Right lobe of liver (tissue), 6 donors: ENCODE measurements at regions of chr6 and their contacts with region 1.

Region 1: DNA sequence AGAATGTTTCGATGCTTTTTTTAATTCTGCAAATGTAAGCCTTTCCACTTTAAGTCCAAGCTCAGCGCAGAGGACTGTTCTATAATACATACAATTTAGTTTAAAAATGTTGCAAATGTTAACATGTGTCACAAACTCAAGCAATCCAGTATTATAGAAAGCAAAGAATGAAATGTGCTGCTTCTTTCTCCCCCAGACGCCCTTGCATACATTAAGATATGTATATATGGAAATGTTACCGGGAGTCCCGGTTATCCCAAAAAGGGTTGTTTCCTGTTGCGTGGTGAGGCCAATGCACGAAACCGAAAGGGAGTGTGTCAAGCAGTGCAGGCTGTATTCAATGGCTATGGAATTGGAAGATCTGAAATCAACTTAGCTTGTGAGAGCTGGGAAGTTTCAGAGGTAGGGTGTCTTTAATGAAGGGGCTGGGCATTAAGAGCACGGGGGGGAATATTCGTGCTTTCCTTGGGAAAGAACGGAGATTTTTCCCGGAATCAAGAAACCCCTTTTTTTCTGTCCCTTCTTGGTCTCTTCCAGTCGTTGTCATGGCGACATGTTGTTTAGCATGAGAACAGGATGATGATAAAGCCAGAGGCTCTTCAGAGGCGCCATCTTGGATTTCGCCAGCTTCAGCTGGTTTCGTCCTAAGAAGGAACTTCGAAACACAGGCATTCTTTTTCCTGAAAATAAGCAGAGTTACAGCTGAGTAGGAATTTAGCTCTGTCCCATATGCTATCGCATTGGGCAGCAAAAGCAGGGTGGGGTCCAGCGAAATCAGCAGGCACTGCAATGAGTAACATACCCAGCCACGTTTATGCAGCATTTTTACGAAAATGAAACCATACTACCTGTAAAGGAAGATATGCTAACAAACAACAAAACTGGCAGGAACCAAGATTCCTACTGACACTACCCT is 10.1 kb upstream of the NQO2 start:
- DNase-seq: peak; percentile 71 to 89 (median 82)
- ATAC-seq: peak; percentile 53 to 72 (median 68)
- H3K4me3 ChIP-seq: peak overlapping the region; percentile 87 to 92 (median 92)
- H3K27ac ChIP-seq: peak overlapping the region; percentile 97 to 99 (median 97)
- H3K4me1 ChIP-seq: peaks cover 0 to 6% (median 0%) of the 10 kb centered on the region in 4 donors
- H3K27me3 ChIP-seq: no peaks in the 10 kb centered on the region
- CTCF ChIP-seq: peak in 2 of 4 donors; percentile 28 to 36
- POLR2A ChIP-seq: peak; percentile 5

Region 2: GRCh38 chr6:3063733-3064700 is 74.4 kb after region 1 on chr6:
- intact Hi-C with region 1: loop called in 1 of 2 experiments (anchors 5 kb)
- DNase-seq: peak; percentile 97 to 99 (median 97)
- ATAC-seq: peak; percentile 89 to 95 (median 91)
- H3K4me3 ChIP-seq: peak overlapping the region; percentile 64 to 91 (median 68)
- H3K27ac ChIP-seq: peak overlapping the region; percentile 76 to 84 (median 82)
- H3K4me1 ChIP-seq: peaks cover 0 to 3% (median 0%) of the 10 kb centered on the region in 4 donors
- H3K27me3 ChIP-seq: no peaks in the 10 kb centered on the region
- CTCF ChIP-seq: peak in 2 of 4 donors; percentile 21 to 41
- POLR2A ChIP-seq: peak; percentile 99